ENCODE measurements at regions of chr1 and their contacts with region 1.

Region 1: GRCh38 chr1:67332653-67333529 is 25.2 kb downstream of the IL12RB2 start:
- DNase-seq: peak; percentile 67
- H3K4me3 Mint-ChIP-seq: no peak overlapping the region
- H3K27ac Mint-ChIP-seq: peak overlapping the region; percentile 97
- H3K4me1 Mint-ChIP-seq: peaks cover 79% of the 10 kb centered on the region
- H3K27me3 Mint-ChIP-seq: no peaks in the 10 kb centered on the region

Region 2: DNA sequence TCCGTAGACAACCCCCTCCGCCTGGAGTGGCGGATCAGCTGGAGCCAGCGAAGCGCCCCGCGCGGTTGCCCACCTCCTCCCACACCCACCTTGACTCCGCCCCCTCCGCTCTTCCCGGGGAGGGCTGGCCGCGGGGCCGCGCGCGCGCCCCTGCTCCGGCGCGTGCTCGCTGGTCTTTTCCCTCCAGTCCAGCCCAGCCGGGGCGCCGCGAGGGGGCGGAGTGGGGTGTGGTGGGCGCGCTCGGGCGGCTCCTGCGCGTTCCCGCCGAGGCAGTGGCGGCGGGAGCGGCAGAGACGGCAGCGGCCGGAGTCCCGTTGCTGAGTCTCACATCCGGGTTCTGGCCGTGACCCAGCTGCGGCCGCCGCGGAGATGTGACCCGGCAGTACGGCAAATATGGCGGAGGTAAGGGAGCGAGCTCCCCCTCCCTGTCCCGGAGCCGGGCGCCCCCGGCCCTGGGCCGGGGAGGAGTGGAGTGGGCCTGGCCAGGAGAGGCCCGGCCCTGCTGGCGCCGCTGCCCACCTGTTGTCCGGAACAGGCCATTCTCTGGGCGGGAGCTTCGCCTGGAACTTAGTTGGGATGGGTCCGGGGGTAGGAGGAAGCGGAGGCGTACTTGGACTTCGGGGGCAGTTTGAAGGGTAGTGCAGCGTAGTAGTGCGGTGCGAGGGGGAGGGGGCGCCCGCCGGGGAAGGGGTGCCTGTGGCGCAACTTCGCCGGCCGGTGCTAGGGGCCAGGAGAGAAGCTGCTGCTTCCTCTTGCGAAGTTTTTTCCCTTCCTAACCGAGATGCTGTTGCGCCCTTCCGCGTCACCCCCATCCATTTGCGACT is 402.7 kb before region 1 on chr1:
- CTCF ChIA-PET with region 1: no interaction called
- intact Hi-C with region 1: loop called (anchors 2 kb)
- DNase-seq: peak; percentile 92
- H3K4me3 Mint-ChIP-seq: peak overlapping the region; percentile 84
- H3K27ac Mint-ChIP-seq: peak overlapping the region; percentile 92
- H3K4me1 Mint-ChIP-seq: peaks cover 51% of the 10 kb centered on the region
- H3K27me3 Mint-ChIP-seq: no peaks in the 10 kb centered on the region

Region 3: GRCh38 chr1:67194209-67194863 is 138.6 kb before region 1 on chr1:
- CTCF ChIA-PET with region 1: interaction called, 3 read pairs
- intact Hi-C with region 1: loop called (anchors 1 kb)
- DNase-seq: no peak
- H3K4me3 Mint-ChIP-seq: no peak overlapping the region
- H3K27ac Mint-ChIP-seq: no peak overlapping the region
- H3K4me1 Mint-ChIP-seq: peaks cover 39% of the 10 kb centered on the region
- H3K27me3 Mint-ChIP-seq: no peaks in the 10 kb centered on the region

Region 4: GRCh38 chr1:67274623-67275325 is 58.1 kb before region 1 on chr1:
- CTCF ChIA-PET with region 1: interaction called, 8 read pairs
- intact Hi-C with region 1: loop called (anchors 1 kb)
- DNase-seq: peak; percentile 55
- H3K4me3 Mint-ChIP-seq: no peak overlapping the region
- H3K27ac Mint-ChIP-seq: peak overlapping the region; percentile 90
- H3K4me1 Mint-ChIP-seq: peaks cover 55% of the 10 kb centered on the region
- H3K27me3 Mint-ChIP-seq: no peaks in the 10 kb centered on the region

Region 5: GRCh38 chr1:67314696-67315095 is 18.2 kb before region 1 on chr1:
- CTCF ChIA-PET with region 1: interaction called, 6 read pairs
- intact Hi-C with region 1: loop called (anchors 1 kb)
- DNase-seq: peak; percentile 56
- H3K4me3 Mint-ChIP-seq: peak overlapping the region; percentile 47
- H3K27ac Mint-ChIP-seq: peak overlapping the region; percentile 95
- H3K4me1 Mint-ChIP-seq: peaks cover 46% of the 10 kb centered on the region
- H3K27me3 Mint-ChIP-seq: no peaks in the 10 kb centered on the region

Region 6: DNA sequence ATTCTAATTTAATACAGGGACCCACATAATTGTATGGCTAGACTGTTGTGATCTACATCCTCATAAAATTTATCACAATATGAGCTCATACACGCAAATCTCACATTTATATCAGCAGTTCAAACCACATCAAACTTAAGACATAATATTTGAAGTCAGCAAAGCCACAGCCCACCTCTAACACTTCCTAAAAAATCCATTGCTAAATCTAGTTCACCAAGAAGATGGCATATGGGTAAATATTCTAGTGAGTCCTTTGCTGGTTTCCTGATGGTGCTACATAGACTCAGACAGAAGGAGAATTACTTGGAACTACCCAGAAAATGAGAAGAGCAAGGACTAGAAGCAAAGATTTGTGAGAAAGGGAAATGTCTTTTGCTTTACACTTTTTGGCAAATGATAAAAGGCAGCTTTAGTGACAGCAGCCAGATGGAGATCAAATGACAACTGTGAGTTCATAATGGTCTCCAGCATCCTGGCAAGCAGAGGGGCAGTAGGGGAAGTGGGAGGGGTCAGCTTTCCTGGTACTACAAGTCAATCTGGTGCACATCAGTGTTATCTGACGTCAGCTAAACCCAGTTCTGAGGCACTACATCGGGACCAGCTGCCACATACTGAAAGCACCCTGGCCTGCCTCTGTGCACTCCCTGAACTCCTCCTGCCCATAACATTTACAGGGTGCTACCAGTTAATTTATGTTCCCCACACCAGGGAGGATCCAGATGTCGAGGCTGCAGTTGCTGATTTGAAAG is 341.5 kb after region 1 on chr1:
- CTCF ChIA-PET with region 1: no interaction called
- intact Hi-C with region 1: loop called (anchors 2 kb)
- DNase-seq: peak; percentile 82
- H3K4me3 Mint-ChIP-seq: peak overlapping the region; percentile 16
- H3K27ac Mint-ChIP-seq: peak overlapping the region; percentile 85
- H3K4me1 Mint-ChIP-seq: peaks cover 22% of the 10 kb centered on the region
- H3K27me3 Mint-ChIP-seq: no peaks in the 10 kb centered on the region

Measured in activated naive CD4-positive, alpha-beta T cell treated with anti-CD3 and anti-CD28 coated beads for 36 hours (primary cell).